ENCODE measurements at regions of chr2 and their contacts with region 1.

Region 1: GRCh38 chr2:86440631-86441391 is at the start of gene KDM3A:
- DNase-seq: peak; percentile 100
- H3K4me3 Mint-ChIP-seq: peak within 1 kb of the TSS; percentile 92
- H3K27ac Mint-ChIP-seq: peak within 1 kb of the TSS; percentile 99
- H3K4me1 Mint-ChIP-seq: peaks cover 43% of the 10 kb centered on the region
- H3K27me3 Mint-ChIP-seq: peaks cover 6% of the 10 kb centered on the region
- total RNA-seq, gene KDM3A: 81.9 to 91.8 TPM

Region 2: DNA sequence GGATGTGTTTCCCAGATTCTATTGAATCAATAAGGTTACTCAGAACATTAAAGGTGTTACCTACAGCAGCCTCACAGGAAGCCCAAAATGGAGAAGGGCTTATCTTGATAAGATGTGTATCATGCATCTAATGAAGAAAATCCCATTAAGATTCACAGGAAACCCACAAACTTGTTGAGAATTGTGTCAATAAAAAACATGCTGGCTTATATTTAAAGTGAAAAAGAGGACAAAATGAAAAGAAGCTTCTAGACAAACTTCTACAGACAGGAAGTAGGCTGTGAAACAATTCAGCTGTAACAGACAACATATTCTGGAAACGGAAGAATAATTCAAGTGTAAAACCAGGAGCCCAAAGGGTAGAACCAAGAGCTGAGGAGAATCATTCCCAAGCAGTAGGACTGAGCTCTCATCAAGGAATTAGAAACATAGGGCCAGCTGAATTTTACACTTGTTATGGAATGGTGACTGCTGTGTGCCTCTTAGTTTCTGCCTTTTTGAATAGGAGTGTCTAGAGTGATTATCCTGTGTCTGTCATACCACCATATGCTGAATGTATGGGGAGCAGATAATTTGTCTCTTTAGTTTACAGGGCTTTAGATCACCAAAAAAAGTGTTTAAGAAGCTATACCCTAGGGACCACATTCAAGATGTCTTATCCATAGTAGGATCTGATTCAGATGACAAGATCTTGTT is 255.1 kb before region 1 on chr2:
- CTCF ChIA-PET with region 1: no interaction called
- POLR2A ChIA-PET with region 1: interaction called, 23 read pairs
- DNase-seq: no peak
- H3K4me3 Mint-ChIP-seq: peak overlapping the region; percentile 61
- H3K27ac Mint-ChIP-seq: peak overlapping the region; percentile 94
- H3K4me1 Mint-ChIP-seq: peaks cover 80% of the 10 kb centered on the region
- H3K27me3 Mint-ChIP-seq: no peaks in the 10 kb centered on the region

Region 3: DNA sequence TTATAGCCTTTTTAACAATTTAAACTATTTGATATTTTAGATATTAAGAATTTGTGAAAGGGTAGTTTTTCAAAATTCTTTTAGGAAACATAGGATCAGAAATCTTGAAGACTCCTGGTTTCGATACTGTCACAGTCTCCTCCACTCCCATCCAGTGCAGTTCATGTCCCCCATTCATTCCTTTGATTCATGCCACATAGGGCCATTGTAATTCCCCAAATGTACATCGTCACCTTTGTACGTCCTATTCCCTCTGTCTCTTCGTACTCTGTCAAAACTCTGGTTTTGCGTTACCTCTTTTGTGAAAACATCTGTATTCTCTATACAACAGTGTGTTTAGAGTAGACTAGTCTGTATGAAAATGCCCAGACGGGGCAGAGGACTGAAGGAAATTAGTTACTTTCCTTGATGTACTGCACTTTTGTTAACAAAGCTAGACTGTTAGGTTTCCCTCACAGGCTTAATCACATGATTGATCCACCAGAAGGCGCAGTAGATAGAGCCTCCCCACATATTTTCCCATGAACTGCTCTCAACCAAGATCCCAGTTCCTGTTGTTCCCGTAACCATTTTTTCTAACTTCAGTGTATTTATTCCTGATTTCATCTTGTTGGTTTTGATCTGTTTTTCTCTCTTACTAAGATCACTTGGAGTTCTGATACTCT is 239.0 kb before region 1 on chr2:
- CTCF ChIA-PET with region 1: no interaction called
- POLR2A ChIA-PET with region 1: interaction called, 19 read pairs
- DNase-seq: no peak
- H3K4me3 Mint-ChIP-seq: peak overlapping the region; percentile 18
- H3K27ac Mint-ChIP-seq: no peak overlapping the region
- H3K4me1 Mint-ChIP-seq: peaks cover 40% of the 10 kb centered on the region
- H3K27me3 Mint-ChIP-seq: no peaks in the 10 kb centered on the region

Region 4: GRCh38 chr2:86453836-86454235 is 13.0 kb after region 1 on chr2:
- CTCF ChIA-PET with region 1: interaction called, 6 read pairs
- POLR2A ChIA-PET with region 1: interaction called, 29 read pairs
- DNase-seq: no peak
- H3K4me3 Mint-ChIP-seq: no peak overlapping the region
- H3K27ac Mint-ChIP-seq: no peak overlapping the region
- H3K4me1 Mint-ChIP-seq: peaks cover 9% of the 10 kb centered on the region
- H3K27me3 Mint-ChIP-seq: no peaks in the 10 kb centered on the region

Region 5: GRCh38 chr2:86476092-86476491 is 35.3 kb after region 1 on chr2:
- CTCF ChIA-PET with region 1: no interaction called
- POLR2A ChIA-PET with region 1: interaction called, 11 read pairs
- DNase-seq: no peak
- H3K4me3 Mint-ChIP-seq: no peak overlapping the region
- H3K27ac Mint-ChIP-seq: no peak overlapping the region
- H3K4me1 Mint-ChIP-seq: peaks cover 10% of the 10 kb centered on the region
- H3K27me3 Mint-ChIP-seq: no peaks in the 10 kb centered on the region

Region 6: GRCh38 chr2:86518481-86518880 is 77.7 kb after region 1 on chr2:
- CTCF ChIA-PET with region 1: no interaction called
- POLR2A ChIA-PET with region 1: no interaction called
- DNase-seq: no peak
- H3K4me3 Mint-ChIP-seq: no peak overlapping the region
- H3K27ac Mint-ChIP-seq: no peak overlapping the region
- H3K4me1 Mint-ChIP-seq: no peaks in the 10 kb centered on the region
- H3K27me3 Mint-ChIP-seq: no peaks in the 10 kb centered on the region

Region 7: DNA sequence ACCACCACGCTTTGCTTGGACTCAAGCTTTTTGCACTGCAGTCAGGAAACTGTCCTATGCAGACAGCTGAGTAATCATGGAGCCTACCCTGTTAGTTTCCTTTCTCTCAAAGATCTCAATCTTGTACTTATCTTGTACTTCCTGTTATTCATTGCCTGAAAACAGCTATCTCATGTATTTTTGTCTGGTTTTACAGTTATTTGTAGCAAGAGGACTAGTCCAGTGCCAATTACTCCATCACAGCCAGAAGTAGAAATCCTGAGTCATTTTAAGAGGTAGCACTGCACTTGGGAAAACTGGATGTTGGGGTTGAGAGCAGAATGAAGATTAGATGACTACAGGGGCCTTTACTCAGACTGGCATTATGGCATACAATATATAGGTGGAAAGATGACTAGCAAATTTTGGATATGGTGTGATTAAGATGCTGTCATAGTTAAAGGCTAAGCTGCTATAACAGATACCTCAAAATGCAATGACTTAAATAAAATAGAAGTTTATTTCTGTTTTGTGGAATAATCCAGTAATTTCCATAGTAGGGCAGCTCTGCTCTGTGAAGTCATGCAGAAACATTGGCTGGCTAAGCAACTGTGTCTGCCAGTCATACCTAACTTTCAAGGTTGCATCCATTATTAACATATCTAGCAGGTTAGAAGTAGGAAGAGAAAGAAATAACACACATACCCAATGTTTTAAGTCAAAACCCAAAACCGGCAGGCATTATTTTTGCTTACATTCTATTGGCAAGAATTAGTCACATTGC is 143.5 kb after region 1 on chr2:
- CTCF ChIA-PET with region 1: no interaction called
- POLR2A ChIA-PET with region 1: interaction called, 18 read pairs
- DNase-seq: peak; percentile 31
- H3K4me3 Mint-ChIP-seq: no peak overlapping the region
- H3K27ac Mint-ChIP-seq: peak overlapping the region; percentile 89
- H3K4me1 Mint-ChIP-seq: peaks cover 23% of the 10 kb centered on the region
- H3K27me3 Mint-ChIP-seq: peaks cover 4% of the 10 kb centered on the region

Measured in activated CD4-positive, alpha-beta memory T cell treated with anti-CD3 and anti-CD28 coated beads, Interleukin-2, amount 10 ng/mL, durations not matched to agents 7 days and 5 days (primary cell).